ENCODE measurements at regions of chr10 and their contacts with region 1.

Region 1: DNA sequence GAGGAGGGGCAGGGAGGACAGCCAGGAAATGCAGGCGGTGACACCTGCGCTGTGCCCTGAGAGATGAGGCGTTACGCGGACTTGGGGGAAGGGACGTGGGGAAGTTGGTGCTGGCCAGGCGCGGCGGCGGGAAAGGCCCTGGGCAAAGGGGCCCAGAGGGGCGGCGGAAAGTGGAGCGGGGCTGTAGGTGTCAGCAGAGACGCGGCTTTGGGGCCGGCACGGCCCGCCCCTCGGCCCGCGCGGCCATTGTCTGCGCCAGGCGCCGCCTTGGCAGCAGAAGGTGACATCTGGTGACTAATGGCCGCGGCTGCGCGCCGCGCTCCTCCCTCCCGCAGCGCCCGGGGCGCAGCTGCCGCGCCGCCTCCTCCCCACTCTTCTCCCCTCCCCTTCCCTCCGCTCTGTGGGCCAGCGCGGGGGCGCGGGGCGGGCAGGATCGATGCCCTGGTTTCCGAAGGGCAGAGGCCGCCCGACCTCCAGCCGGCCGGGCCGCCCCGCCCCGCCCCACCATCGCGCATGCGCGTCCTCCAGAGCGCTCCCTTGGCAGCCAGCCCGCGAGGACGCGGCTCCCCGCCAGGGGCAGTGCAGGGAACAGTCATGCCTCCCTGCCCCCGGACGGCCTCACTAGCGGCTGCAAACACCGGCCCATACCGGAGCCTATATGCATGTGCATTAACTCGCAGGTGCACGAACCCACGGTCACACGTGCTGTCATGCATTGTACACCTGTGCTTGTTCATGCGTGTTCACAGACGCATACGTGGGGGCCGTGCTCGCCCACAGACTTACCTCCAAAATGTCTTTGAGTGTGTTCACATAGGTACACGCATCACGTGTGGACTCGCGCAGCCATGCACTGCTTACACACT is 269.6 kb downstream of the RPS24 start:
- DNase-seq: peak; percentile 89
- ATAC-seq: peak; percentile 93
- H3K4me3 ChIP-seq: peak overlapping the region; percentile 60 to 89 (median 61)
- H3K27ac ChIP-seq: peak overlapping the region; percentile 45
- H3K4me1 ChIP-seq: peaks cover 16% of the 10 kb centered on the region
- H3K27me3 ChIP-seq: peaks cover 0 to 2% of the 10 kb centered on the region in 2 experiments; a peak in 2 of 5 replicates
- CTCF ChIP-seq: peak; percentile 86
- EP300 ChIP-seq: no peak
- POLR2A ChIP-seq: peak; percentile 72 to 75
- RAD21 ChIP-seq: peak; percentile 74; the same call in 1 of the 2 replicates

Region 2: GRCh38 chr10:78255796-78256638 is 47.2 kb before region 1 on chr10:
- CTCF ChIA-PET with region 1: no interaction called
- POLR2A ChIA-PET with region 1: no interaction called
- in situ Hi-C with region 1: no loop called
- intact Hi-C with region 1: no loop called
- DNase-seq: peak; percentile 65
- ATAC-seq: peak; percentile 54
- H3K4me3 ChIP-seq: no peak overlapping the region
- H3K27ac ChIP-seq: no peak overlapping the region
- H3K4me1 ChIP-seq: peaks cover 28% of the 10 kb centered on the region
- H3K27me3 ChIP-seq: peaks cover 0 to 3% of the 10 kb centered on the region in 2 experiments; a peak in 2 of 5 replicates
- CTCF ChIP-seq: no peak
- EP300 ChIP-seq: no peak
- POLR2A ChIP-seq: no peak
- RAD21 ChIP-seq: no peak

Region 3: DNA sequence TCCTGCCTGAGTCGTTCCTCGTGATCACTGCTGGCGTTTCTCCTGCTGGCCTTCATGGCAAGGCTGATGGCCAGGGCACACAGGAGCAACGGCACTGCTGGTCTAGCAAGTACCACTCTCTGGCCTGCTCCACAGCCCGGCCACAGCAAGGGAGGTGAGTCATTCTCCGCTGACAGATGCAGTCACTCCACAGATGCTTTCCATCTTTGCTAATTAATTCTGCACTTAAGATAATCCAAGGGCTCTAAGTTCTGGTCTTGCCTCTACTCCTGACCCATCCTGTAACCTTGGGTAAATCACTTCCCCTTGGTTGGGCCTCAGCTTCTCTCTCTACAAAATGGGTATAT is 25.2 kb before region 1 on chr10:
- CTCF ChIA-PET with region 1: no interaction called
- POLR2A ChIA-PET with region 1: no interaction called
- in situ Hi-C with region 1: no loop called
- intact Hi-C with region 1: no loop called
- DNase-seq: no peak
- ATAC-seq: no peak
- H3K4me3 ChIP-seq: no peak overlapping the region
- H3K27ac ChIP-seq: no peak overlapping the region
- H3K4me1 ChIP-seq: no peaks in the 10 kb centered on the region
- H3K27me3 ChIP-seq: peaks cover 6 to 34% of the 10 kb centered on the region in 2 experiments; a peak in 4 of 5 replicates
- CTCF ChIP-seq: no peak
- EP300 ChIP-seq: no peak
- POLR2A ChIP-seq: no peak
- RAD21 ChIP-seq: no peak

Region 4: GRCh38 chr10:78579995-78580394 is 276.8 kb after region 1 on chr10:
- CTCF ChIA-PET with region 1: no interaction called
- POLR2A ChIA-PET with region 1: no interaction called
- in situ Hi-C with region 1: no loop called
- intact Hi-C with region 1: loop called (anchors 10 kb)
- DNase-seq: peak; percentile 30
- ATAC-seq: peak; percentile 60
- H3K4me3 ChIP-seq: no peak overlapping the region
- H3K27ac ChIP-seq: no peak overlapping the region
- H3K4me1 ChIP-seq: peaks cover 79% of the 10 kb centered on the region
- H3K27me3 ChIP-seq: no peaks in the 10 kb centered on the region
- CTCF ChIP-seq: peak; percentile 8; the same call in 1 of the 2 replicates
- EP300 ChIP-seq: no peak
- POLR2A ChIP-seq: no peak
- RAD21 ChIP-seq: no peak

Measured in HepG2 (cell line).